Right ventricle myocardium superior (tissue), 1 donor: ENCODE measurements at regions of chr16 and their contacts with region 1.

Region 1: DNA sequence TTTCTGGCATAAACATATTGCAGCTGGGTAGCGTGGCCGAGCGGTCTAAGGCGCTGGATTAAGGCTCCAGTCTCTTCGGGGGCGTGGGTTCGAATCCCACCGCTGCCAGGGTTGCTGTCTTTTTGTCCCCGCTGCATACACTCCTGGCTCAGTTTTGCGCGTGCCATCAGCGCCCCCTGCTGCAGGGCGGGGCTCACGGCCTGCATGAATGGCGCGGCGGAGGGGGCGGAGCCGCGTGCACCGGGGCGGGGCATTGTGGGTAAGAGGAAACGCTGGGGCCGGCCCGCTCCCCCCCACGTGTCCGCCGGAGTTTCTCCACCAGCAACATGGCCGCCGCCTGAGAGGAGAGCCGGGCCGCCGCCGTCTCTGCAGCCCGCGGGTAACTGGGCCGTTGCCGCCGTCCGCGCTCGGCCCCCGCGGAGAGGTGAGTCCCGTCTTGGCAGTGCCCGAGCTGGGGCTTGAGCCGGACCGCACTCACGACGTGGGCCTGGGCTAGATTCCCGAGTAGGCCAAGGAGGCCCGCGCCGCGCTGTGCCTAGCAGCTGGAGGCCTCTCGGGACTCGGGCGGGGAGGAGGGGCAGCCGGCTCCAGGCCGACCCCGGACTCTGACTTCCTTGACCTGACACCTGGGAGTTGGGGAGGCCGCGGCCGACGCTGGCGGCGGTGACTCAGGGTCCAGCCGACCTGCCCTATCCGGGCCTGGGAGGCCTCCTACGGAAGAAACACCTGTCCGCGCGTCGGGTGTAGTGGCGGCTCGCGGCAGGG is at the start of gene POLR3E:
- DNase-seq: peak; percentile 100
- ATAC-seq: peak; percentile 97
- total RNA-seq, gene POLR3E: 34.8 TPM

Region 2: GRCh38 chr16:21982108-21982507 is 315.2 kb before region 1 on chr16:
- intact Hi-C with region 1: no loop called
- DNase-seq: no peak
- ATAC-seq: no peak

Region 3: GRCh38 chr16:22001591-22001990 is 295.7 kb before region 1 on chr16:
- intact Hi-C with region 1: loop called (anchors 10 kb)
- DNase-seq: no peak
- ATAC-seq: no peak

Region 4: DNA sequence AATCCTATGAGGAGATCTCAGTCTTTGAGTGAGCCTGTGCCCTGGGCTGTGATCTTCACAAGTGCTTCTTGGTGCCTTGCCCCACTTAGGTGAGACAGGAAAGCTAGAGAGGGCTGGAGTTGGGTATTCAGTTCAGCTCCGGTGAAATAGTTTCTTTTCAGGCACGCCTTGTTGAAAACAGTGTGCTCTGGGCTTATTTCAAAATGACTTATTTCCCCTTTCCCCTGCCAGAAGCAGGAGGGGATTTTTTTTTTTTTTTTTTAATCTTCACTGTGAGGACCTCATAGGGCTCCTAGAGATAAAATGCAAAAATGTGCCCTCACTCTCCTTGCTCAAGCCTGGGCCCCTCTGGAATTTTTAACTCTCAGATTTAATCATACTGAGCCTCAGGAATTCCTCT is 262.1 kb before region 1 on chr16:
- intact Hi-C with region 1: no loop called
- DNase-seq: no peak
- ATAC-seq: no peak

Region 5: GRCh38 chr16:22195695-22196558 is 101.4 kb before region 1 on chr16:
- intact Hi-C with region 1: loop called (anchors 1 kb)
- DNase-seq: peak; percentile 92
- ATAC-seq: peak; percentile 57